Psoas muscle (tissue), 8 donors: ENCODE measurements at regions of chr6 and their contacts with region 1.

Region 1: GRCh38 chr6:82196161-82196560 is 51.4 kb downstream of the IBTK start:
- DNase-seq: no peak
- ATAC-seq: no peak
- H3K4me3 ChIP-seq: no peak overlapping the region
- H3K27ac ChIP-seq: no peak overlapping the region
- H3K4me1 ChIP-seq: no peaks in the 10 kb centered on the region
- H3K27me3 ChIP-seq: no peaks in the 10 kb centered on the region
- CTCF ChIP-seq: no peak

Region 2: DNA sequence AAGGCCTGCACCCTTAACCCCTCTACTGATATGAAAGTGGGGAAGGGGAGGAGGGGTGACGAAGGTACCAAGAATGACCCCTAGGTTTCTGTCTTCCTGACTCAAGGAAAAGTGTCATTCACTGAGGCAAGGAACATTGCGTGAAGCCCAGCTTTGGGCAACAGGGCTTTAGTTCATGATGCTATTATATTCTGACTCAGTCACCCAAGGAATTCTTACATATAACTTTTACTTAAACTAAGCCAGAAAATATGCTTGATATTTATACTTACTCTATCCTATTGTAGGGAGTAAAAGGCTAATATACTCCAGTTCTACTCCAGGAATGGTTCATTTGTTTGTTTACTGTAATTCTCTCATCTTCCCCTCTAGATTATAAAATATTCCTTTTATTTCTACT is 931.8 kb after region 1 on chr6:
- intact Hi-C with region 1: loop called in 1 of 2 experiments (anchors 10 kb)
- DNase-seq: no peak
- ATAC-seq: no peak
- H3K4me3 ChIP-seq: no peak overlapping the region
- H3K27ac ChIP-seq: no peak overlapping the region
- H3K4me1 ChIP-seq: no peaks in the 10 kb centered on the region
- H3K27me3 ChIP-seq: no peaks in the 10 kb centered on the region
- CTCF ChIP-seq: no peak